ENCODE measurements at regions of chr5 and their contacts with region 1.

Region 1: DNA sequence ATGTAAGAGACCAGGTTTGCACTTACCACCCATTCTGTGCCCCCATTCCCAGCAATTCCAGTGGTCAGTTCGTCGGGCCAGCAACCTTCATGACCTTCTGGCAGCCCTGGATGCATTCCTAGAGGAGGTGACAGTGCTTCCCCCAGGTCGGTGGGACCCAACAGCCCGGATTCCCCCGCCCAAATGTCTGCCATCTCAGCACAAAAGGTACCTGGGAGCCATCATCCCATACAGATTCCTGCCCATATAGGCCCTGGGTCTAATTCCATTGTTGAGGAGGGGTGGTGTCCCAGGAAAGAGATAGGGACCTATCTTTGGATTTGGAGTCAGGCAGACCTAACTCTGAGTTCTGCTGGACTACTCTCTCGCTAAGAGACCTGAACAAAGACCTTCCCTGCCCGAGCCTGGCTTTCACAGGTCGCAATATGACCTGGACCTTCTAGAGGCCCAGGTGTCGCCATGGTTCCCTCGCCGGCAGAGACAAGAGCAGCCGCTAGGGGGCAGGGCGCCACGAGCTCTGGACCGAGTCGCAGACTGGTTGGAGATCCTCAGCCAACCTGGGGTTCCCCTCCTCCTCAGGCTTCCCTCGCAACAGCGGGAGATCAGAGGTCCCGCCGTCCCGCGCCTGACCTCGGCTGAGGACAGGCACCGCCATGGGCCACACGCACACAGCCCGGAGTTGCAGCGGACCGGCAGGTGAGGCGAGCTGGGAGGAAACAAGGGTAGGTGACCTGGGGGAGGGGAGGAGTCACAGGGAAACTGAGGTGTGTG is 3.1 kb downstream of the SLC4A9 start:
- DNase-seq: peak; percentile 59 to 83 (median 78)
- H3K4me3 ChIP-seq: no peak overlapping the region
- H3K27ac ChIP-seq: no peak overlapping the region
- H3K4me1 ChIP-seq: no peaks in the 10 kb centered on the region
- H3K27me3 ChIP-seq: no peaks in the 10 kb centered on the region
- CTCF ChIP-seq: peak; percentile 64 to 93 (median 78)
- EP300 ChIP-seq: no peak
- POLR2A ChIP-seq: no peak

Region 2: DNA sequence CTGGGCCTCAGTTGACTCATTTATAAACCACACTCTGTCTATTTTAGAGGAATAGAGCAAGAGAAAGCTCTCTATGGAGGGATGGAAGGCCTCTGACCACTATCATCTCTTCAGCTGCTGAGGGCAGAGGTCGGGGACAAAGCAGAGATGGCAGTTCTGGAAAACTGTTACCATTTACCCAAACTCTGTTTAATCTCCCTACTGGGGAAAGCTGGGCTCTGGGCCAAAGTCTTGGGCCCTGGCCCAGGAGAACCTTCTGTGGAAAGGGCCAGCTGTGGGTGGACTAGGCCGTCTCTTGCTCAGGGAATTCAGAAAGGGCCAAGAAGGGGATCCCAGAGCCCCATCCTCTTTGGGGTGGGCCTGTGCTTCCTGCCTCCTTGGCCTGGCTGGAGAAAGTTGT is 467.4 kb before region 1 on chr5:
- intact Hi-C with region 1: no loop called
- DNase-seq: peak; percentile 67 to 92 (median 83)
- H3K4me3 ChIP-seq: no peak overlapping the region
- H3K27ac ChIP-seq: peak overlapping the region; percentile 5 to 52
- H3K4me1 ChIP-seq: peaks cover 20% of the 10 kb centered on the region
- H3K27me3 ChIP-seq: no peaks in the 10 kb centered on the region
- CTCF ChIP-seq: no peak
- EP300 ChIP-seq: no peak
- POLR2A ChIP-seq: no peak

Region 3: GRCh38 chr5:140141241-140141640 is 221.8 kb before region 1 on chr5:
- intact Hi-C with region 1: no loop called
- DNase-seq: no peak
- H3K4me3 ChIP-seq: no peak overlapping the region
- H3K27ac ChIP-seq: no peak overlapping the region
- H3K4me1 ChIP-seq: peaks cover 5% of the 10 kb centered on the region
- H3K27me3 ChIP-seq: no peaks in the 10 kb centered on the region
- CTCF ChIP-seq: no peak
- EP300 ChIP-seq: no peak
- POLR2A ChIP-seq: no peak

Region 4: DNA sequence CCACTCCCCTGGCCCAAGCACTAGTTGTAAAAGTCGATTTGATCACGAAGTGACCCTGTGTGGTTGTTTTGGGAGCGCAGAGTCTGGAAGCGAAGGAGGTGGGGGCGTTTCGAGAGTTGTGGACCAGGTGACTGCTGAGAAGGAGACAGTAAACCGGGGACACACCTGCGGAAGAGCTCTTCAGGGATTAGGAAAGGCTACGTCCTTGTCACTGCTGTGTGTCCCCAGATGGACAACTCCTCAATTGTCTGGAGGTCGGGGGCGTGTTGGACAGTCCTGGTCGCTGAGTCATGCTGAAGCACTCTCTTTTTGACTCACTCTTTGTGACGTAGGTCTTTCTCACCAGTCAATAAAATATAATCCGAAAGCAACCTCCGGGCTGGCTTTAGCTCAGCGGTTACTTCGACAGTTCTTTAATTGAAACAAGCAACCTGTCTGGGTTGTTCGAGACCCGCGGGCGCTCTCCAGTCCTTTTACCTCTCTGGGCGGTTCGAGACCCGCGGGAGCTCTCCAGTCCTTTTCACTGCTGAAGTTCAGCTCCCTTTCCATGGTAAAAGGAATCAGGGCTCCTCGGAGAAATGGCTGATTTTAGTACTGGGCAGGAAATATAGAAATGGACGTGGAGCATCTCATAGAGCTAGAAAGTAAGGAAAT is 348.0 kb after region 1 on chr5:
- intact Hi-C with region 1: loop called in 1 of 4 experiments (anchors 10 kb)
- DNase-seq: peak; percentile 78 to 92 (median 81)
- H3K4me3 ChIP-seq: peak overlapping the region; percentile 46
- H3K27ac ChIP-seq: peak overlapping the region; percentile 93 to 95
- H3K4me1 ChIP-seq: no peaks in the 10 kb centered on the region
- H3K27me3 ChIP-seq: no peaks in the 10 kb centered on the region
- CTCF ChIP-seq: no peak
- EP300 ChIP-seq: no peak
- POLR2A ChIP-seq: peak; percentile 76

Region 5: DNA sequence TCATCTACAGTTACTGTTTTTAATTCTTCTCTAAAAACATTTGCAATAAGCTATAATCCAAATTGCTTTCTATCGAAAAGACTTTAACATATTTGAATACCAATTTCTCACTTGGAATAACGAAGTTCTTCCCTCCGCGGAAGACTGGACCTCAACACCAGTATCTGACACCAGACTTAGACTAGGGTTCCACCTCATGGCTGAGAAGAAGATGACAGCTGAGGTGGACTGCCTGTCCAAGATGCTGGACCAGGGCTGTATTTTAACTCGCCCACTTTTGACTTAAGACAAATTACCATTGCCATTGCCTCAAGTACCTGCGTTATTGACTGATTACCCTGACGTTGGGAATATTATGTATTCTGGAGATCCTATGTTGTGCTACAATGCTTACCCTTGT is 371.3 kb after region 1 on chr5:
- intact Hi-C with region 1: loop called in 1 of 4 experiments (anchors 10 kb)
- DNase-seq: no peak
- H3K4me3 ChIP-seq: no peak overlapping the region
- H3K27ac ChIP-seq: no peak overlapping the region
- H3K4me1 ChIP-seq: no peaks in the 10 kb centered on the region
- H3K27me3 ChIP-seq: peaks cover 2% of the 10 kb centered on the region
- CTCF ChIP-seq: no peak
- EP300 ChIP-seq: no peak
- POLR2A ChIP-seq: no peak

Measured in ovary (tissue), 10 donors.